ENCODE measurements at regions of chr5 and their contacts with region 1.

Region 1: DNA sequence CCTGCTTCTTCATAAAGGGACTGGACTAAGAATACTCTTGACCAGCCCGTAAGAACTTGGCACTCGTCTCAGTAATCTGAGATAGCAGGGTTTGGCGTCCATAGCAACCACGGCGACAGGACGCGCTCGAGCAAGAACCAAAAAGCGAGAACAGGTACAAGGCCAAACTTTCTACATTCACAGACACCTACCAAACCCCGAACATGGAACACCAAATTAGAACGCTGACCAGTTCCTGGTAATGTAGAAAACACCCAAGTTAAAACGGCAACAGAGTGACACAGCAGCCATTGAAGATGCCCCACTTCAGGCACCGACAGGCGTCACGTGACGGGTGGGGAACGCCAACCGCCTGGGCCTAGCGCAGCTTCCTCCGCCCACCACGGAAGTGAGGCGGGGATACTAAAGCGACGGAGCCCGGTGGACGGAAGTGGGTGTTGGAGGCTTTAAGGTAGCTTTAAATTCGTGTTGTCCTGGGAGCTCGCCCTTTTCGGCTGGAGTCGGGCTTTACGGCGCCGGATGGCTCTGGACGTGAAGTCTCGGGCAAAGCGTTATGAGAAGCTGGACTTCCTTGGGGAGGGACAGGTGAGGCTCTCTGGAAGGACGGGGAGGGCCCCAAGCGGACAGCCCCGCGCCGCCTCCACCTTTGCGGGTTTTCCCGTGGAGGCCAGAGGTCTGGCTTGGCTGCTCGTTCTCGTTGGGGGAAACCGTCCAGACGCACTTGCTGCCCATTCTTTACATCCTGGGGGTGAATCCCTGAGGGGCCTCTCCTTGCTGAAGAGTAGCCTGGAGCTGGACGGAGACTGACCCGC is at the start of gene CDK7:
- DNase-seq: peak; percentile 90
- H3K4me3 ChIP-seq: peak within 1 kb of the TSS; percentile 97
- H3K27ac ChIP-seq: peak within 1 kb of the TSS; percentile 27
- H3K4me1 ChIP-seq: peaks cover 13% of the 10 kb centered on the region
- CTCF ChIP-seq: no peak
- total RNA-seq, gene CDK7: 18.4 and 31.7 TPM in 2 replicates

Region 2: DNA sequence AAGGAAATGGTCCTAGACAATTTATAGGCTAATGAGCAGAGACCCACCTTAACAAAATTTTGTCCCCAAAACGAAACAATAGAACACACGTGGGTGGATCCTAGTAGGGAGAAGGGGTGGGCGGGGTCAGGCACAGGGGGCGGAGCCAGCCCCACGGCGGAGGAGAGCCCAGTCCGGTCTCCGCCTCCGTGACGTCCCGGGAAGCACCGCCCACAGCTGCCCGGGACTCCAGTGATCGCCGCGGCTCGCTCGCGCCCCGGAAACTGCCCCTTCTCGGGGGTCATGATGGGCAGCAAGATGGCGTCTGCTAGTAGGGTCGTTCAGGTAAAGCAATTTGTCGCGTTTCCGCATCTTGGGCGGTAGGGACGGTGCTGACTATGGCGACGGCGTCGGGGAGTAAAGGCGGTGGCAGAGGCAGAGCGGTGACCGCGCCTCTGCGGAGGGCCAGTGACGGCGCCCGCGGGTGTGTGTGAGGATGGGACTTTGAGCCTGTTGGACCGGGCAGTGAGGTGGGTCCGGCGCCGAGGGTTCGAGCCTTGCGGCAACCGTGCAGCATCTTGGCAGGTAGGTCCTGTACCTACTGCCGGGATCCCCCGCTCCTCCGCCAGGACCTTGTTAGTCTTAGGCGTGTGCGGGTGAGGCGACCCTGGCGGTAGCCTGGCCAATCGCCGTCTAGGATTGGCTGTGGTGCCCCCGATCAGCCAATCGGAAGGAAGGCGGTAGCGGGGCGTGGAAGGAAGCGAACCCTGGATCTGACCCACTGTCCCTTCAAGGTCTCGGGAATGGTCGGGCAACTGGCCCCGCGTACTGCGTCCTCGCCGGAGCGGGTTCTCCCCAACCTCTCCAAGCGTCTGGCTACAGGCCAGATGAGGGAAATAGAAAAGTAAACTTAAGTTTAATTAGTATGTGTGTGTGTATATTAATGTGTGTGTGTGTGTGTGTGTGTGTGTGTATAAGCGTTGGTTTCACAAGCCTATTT is 16.8 kb before region 1 on chr5:
- CTCF ChIA-PET with region 1: interaction called, 3 read pairs
- POLR2A ChIA-PET with region 1: interaction called, 4 read pairs
- intact Hi-C with region 1: loop called (anchors 2 kb)
- DNase-seq: peak; percentile 95
- H3K4me3 ChIP-seq: peak overlapping the region; percentile 85
- H3K27ac ChIP-seq: peak overlapping the region; percentile 75
- H3K4me1 ChIP-seq: peaks cover 25% of the 10 kb centered on the region
- CTCF ChIP-seq: no peak